SK-N-SH (cell line): ENCODE measurements at regions of chr18 and their contacts with region 1.

Region 1: DNA sequence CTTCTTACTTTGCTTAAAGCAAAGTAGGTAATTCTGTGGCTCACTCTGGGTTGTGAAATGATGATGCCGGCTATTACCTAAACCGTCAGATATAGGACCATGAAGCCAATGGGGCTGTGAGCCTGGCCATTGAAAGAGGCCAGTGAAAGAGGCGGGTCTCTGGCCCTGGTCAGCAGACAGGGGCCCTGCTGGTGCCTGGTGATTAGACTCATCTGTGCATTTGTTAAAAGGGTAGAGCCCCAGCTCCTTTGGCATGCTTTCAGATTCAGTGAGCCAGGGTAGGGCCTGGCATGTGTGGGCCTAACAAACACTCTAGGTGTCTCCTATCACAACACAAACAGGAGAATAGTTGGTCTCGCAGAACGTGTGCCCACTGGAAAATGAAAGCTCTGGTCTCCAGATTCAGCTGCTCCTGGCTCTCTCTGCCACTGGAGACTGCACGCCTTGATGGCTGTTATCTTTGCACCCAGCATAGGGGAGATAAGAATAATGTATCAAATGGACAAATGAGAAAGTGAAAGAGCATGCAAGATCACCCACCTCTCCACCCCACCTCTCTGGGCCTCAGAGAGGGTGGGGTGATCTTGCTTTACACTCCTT is 6.9 kb downstream of the LRRC30 start:
- DNase-seq: peak; percentile 66
- H3K4me3 ChIP-seq: no peak overlapping the region; a peak in 1 of 4 replicates
- H3K27ac ChIP-seq: peak overlapping the region in 1 of 2 experiments; percentile 93; a peak in 2 of 4 replicates
- H3K4me1 ChIP-seq: peaks cover 0 to 16% of the 10 kb centered on the region in 2 experiments; a peak in 2 of 4 replicates
- H3K27me3 ChIP-seq: no peaks in the 10 kb centered on the region
- CTCF ChIP-seq: no peak
- EP300 ChIP-seq: peak in 1 of 2 experiments; percentile 66; a peak in 1 of 4 replicates
- RAD21 ChIP-seq: no peak

Region 2: DNA sequence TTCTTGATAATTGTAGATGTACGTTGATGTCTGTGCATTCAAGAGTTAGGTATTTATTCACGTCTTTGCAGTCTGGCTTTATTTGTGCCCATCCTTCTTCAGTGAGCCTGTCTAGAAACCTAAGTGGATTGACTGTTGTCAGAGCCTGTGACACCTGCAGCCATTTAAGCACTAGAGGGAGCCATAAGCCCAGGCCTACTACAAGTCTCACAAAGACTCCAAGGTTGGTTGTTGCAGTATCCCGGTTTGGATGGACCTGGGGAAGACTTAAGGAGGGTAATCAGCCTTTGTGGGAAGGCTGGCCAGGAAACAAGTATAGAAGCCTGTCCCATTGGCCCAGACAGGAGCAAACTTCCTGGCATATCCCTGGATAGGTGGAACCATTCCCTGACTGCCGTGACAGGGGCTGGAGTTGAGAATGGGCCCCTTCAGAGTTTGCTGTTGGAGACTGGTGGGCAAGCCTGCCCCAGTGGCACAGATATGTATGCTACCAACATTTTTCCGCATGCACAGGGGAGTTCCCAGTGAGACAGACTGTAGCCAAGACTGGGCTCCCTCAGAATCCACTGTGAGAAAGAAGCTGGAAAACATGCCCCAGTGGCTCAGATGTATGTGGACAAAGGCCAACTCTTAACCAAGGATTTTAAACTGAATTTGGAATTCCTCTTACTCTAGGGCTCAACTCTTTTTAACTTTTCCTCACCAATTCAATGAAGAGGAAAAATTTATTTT is 16.2 kb before region 1 on chr18:
- CTCF ChIA-PET with region 1: interaction called, 10 read pairs
- POLR2A ChIA-PET with region 1: no interaction called
- DNase-seq: peak; percentile 64
- H3K4me3 ChIP-seq: peak overlapping the region in 1 of 2 experiments; percentile 43; a peak in 1 of 4 replicates
- H3K27ac ChIP-seq: no peak overlapping the region
- H3K4me1 ChIP-seq: no peaks in the 10 kb centered on the region; a peak in 1 of 4 replicates
- H3K27me3 ChIP-seq: no peaks in the 10 kb centered on the region
- CTCF ChIP-seq: peak; percentile 56
- EP300 ChIP-seq: no peak
- RAD21 ChIP-seq: peak; percentile 96